ENCODE measurements at regions of chrX and their contacts with region 1.

Region 1: DNA sequence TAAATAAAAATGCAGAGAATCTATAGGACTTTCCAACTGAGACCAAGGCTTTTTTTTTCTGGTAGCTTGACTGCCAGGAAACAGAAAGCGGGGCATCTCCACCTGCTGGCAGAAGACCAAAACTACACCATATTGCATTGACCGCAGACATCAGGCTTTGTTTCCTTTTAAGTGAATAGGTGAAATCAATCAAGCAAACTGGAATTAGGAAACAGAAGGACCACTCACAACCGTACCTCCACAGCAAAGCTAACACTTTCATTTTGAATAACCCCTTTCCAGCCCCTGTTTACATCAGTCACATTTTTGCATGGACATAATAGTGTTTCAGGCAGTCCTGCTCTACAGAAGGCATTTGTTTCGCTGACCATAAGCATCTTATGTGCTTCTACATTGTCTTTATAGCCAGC is 218.2 kb downstream of the IDS start:
- DNase-seq: peak in 13 of 14 experiments; percentile 1 to 66 (median 32)
- ATAC-seq: no peak
- H3K4me3 ChIP-seq: no peak overlapping the region
- H3K4me3 Mint-ChIP-seq: no peak overlapping the region
- H3K27ac ChIP-seq: no peak overlapping the region
- H3K27ac Mint-ChIP-seq: no peak overlapping the region
- H3K4me1 ChIP-seq: no peaks in the 10 kb centered on the region
- H3K4me1 Mint-ChIP-seq: no peaks in the 10 kb centered on the region
- H3K27me3 ChIP-seq: no peaks in the 10 kb centered on the region
- H3K27me3 Mint-ChIP-seq: no peaks in the 10 kb centered on the region
- CTCF ChIP-seq: peak; percentile 59

Region 2: GRCh38 chrX:147811803-147812202 is 1475.1 kb before region 1 on chrX:
- CTCF ChIA-PET with region 1: no interaction called
- POLR2A ChIA-PET with region 1: no interaction called
- intact Hi-C with region 1: loop called in 1 of 2 experiments (anchors 5 kb)
- DNase-seq: no peak
- ATAC-seq: no peak
- H3K4me3 ChIP-seq: no peak overlapping the region
- H3K4me3 Mint-ChIP-seq: no peak overlapping the region
- H3K27ac ChIP-seq: no peak overlapping the region
- H3K27ac Mint-ChIP-seq: no peak overlapping the region
- H3K4me1 ChIP-seq: no peaks in the 10 kb centered on the region
- H3K4me1 Mint-ChIP-seq: no peaks in the 10 kb centered on the region
- H3K27me3 ChIP-seq: peaks cover 0 to 2% of the 10 kb centered on the region in 2 experiments
- H3K27me3 Mint-ChIP-seq: no peaks in the 10 kb centered on the region
- CTCF ChIP-seq: no peak

Region 3: GRCh38 chrX:148049441-148049840 is 1237.5 kb before region 1 on chrX:
- CTCF ChIA-PET with region 1: interaction called, 3 read pairs
- POLR2A ChIA-PET with region 1: no interaction called
- intact Hi-C with region 1: loop called in 1 of 2 experiments (anchors 2 kb)
- DNase-seq: peak in 3 of 14 experiments; percentile 31 to 48 (median 42)
- ATAC-seq: no peak
- H3K4me3 ChIP-seq: no peak overlapping the region
- H3K4me3 Mint-ChIP-seq: no peak overlapping the region
- H3K27ac ChIP-seq: no peak overlapping the region
- H3K27ac Mint-ChIP-seq: no peak overlapping the region
- H3K4me1 ChIP-seq: no peaks in the 10 kb centered on the region
- H3K4me1 Mint-ChIP-seq: no peaks in the 10 kb centered on the region
- H3K27me3 ChIP-seq: no peaks in the 10 kb centered on the region
- H3K27me3 Mint-ChIP-seq: peaks cover 4% of the 10 kb centered on the region
- CTCF ChIP-seq: peak; percentile 63

Measured in CD4-positive, alpha-beta T cell (primary cell).